Naive thymus-derived CD4-positive, alpha-beta T cell (primary cell): ENCODE measurements at regions of chr20 and their contacts with region 1.

Region 1: GRCh38 chr20:44960103-44960852 is at the start of gene TOMM34:
- DNase-seq: peak; percentile 87 to 98 (median 91)
- ATAC-seq: peak; percentile 97
- H3K4me3 ChIP-seq: peak within 1 kb of the TSS; percentile 71
- H3K4me3 Mint-ChIP-seq: peak within 1 kb of the TSS; percentile 84 to 100 (median 96)
- H3K27ac ChIP-seq: peak within 1 kb of the TSS; percentile 75
- H3K27ac Mint-ChIP-seq: peak within 1 kb of the TSS; percentile 79 to 98 (median 93)
- H3K4me1 ChIP-seq: peaks cover 22 to 24% of the 10 kb centered on the region in 2 donors
- H3K4me1 Mint-ChIP-seq: peaks cover 26 to 71% (median 58%) of the 10 kb centered on the region in 7 donors
- H3K27me3 ChIP-seq: no peaks in the 10 kb centered on the region
- H3K27me3 Mint-ChIP-seq: no peaks in the 10 kb centered on the region
- total RNA-seq, gene TOMM34: 7.0 to 22.5 (median 8.6) TPM

Region 2: DNA sequence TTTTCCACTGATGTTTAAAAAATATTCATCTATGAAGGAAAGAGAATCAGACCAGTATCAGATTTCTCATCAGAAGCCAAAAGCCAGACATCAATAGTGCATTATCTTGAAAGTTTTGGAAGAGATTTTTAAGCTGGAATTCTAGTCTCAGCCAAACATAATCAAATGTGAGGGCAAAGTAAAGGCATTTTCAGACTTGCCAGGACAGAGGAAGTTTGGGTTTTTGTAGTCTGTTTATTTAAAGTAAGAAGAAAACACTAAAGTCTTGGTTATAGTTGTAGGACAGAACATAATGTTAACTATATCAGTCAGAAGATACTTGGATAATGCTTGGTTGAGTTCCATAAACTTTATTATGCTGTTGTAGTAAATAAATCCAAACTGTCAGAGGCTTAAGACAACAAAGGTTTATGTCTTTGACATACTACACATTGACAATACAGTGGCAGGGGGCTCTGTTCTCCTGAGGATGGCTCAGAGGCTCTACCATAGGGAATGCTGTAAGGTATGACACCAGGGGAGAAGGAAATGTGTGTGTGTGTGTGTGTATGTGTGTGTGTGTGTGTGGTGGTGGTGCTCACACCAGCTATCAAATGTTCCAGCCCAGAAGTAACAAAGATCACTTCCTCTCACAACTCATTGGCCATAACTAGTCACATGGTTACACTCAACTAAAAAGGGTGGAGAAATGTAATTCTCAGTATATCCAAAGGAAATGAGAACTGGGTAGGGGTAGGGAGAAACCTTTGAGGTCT is 101.5 kb before region 1 on chr20:
- CTCF ChIA-PET with region 1: no interaction called
- POLR2A ChIA-PET with region 1: no interaction called
- intact Hi-C with region 1: no loop called
- DNase-seq: peak in 3 of 9 donors; percentile 2 to 11 (median 7)
- ATAC-seq: no peak
- H3K4me3 ChIP-seq: no peak overlapping the region
- H3K4me3 Mint-ChIP-seq: no peak overlapping the region
- H3K27ac ChIP-seq: no peak overlapping the region
- H3K27ac Mint-ChIP-seq: no peak overlapping the region
- H3K4me1 ChIP-seq: no peaks in the 10 kb centered on the region
- H3K4me1 Mint-ChIP-seq: peaks cover 0 to 16% (median 10%) of the 10 kb centered on the region in 7 donors
- H3K27me3 ChIP-seq: no peaks in the 10 kb centered on the region
- H3K27me3 Mint-ChIP-seq: peaks cover 0 to under 1% (median 0%) of the 10 kb centered on the region in 5 donors

Region 3: DNA sequence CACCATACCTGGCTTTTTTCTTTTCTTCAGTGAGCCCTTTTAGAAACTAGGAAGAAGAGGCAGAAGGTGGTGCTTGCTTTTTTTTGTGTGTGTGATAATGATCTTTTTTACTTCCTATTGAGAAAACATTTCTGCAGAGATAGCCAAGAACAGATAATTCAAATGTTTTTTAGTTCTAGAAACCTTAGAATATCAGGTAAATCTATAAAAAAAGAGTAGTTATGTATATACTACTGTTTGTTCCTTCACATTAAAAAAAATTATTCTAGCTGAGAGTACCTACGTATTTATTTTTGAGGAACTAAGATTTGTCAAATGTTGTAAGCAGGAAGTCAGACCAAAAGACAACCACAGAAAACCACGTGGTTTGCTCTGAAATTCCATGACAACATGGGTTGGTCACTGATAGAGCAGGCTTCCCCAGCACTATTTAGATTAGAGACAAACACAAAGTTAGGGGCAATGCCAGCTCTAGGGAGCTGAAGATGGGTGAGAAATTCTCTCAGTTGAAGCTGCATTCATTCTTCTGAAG is 18.9 kb after region 1 on chr20:
- CTCF ChIA-PET with region 1: interaction called, 28 read pairs
- POLR2A ChIA-PET with region 1: interaction called, 190 read pairs
- intact Hi-C with region 1: loop called (anchors 2 kb)
- DNase-seq: peak in 8 of 9 donors; percentile 60 to 93 (median 86)
- ATAC-seq: peak; percentile 93
- H3K4me3 ChIP-seq: peak overlapping the region; percentile 40
- H3K4me3 Mint-ChIP-seq: peak overlapping the region; percentile 74 to 90 (median 79)
- H3K27ac ChIP-seq: peak overlapping the region; percentile 98
- H3K27ac Mint-ChIP-seq: peak overlapping the region; percentile 86 to 98 (median 97)
- H3K4me1 ChIP-seq: peaks cover 64 to 70% of the 10 kb centered on the region in 2 donors
- H3K4me1 Mint-ChIP-seq: peaks cover 71 to 96% (median 90%) of the 10 kb centered on the region in 7 donors
- H3K27me3 ChIP-seq: no peaks in the 10 kb centered on the region
- H3K27me3 Mint-ChIP-seq: no peaks in the 10 kb centered on the region

Region 4: GRCh38 chr20:45545754-45546453 is 585.6 kb after region 1 on chr20:
- CTCF ChIA-PET with region 1: no interaction called
- POLR2A ChIA-PET with region 1: no interaction called
- intact Hi-C with region 1: no loop called
- DNase-seq: no peak
- ATAC-seq: no peak
- H3K4me3 ChIP-seq: no peak overlapping the region
- H3K4me3 Mint-ChIP-seq: no peak overlapping the region
- H3K27ac ChIP-seq: no peak overlapping the region
- H3K27ac Mint-ChIP-seq: no peak overlapping the region
- H3K4me1 ChIP-seq: no peaks in the 10 kb centered on the region
- H3K4me1 Mint-ChIP-seq: no peaks in the 10 kb centered on the region
- H3K27me3 ChIP-seq: peaks cover 0 to 7% of the 10 kb centered on the region in 2 donors
- H3K27me3 Mint-ChIP-seq: peaks cover 19 to 56% (median 40%) of the 10 kb centered on the region in 5 donors